ENCODE measurements at regions of chr20 and their contacts with region 1.

Region 1: GRCh38 chr20:15654208-15654645 is 919.0 kb downstream of the KIF16B start:
- DNase-seq: peak; percentile 76 to 79
- H3K4me3 ChIP-seq: no peak overlapping the region
- H3K4me3 Mint-ChIP-seq: no peak overlapping the region
- H3K27ac Mint-ChIP-seq: peak overlapping the region; percentile 24
- H3K4me1 ChIP-seq: peaks cover 30% of the 10 kb centered on the region
- H3K4me1 Mint-ChIP-seq: peaks cover 18% of the 10 kb centered on the region
- H3K27me3 ChIP-seq: no peaks in the 10 kb centered on the region
- H3K27me3 Mint-ChIP-seq: no peaks in the 10 kb centered on the region
- CTCF ChIP-seq: peak; percentile 67 to 78

Region 2: DNA sequence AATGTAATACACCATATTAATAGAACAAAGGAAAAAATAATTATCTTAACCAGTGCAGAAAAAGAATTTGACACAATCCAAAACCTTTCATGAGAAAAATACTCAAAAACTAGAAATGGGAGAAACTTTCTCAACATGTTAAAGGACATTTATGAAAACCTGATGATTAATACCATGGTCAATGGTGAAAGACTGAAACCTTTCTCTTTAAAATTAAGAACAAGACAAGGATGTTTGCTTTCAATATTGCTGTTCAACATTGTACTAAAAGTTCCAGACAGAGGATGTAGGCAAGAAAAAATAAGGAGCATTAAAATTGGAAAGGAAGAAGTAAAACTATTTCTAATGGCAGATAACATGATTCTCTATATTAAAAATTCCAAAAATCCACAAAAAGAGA is 335.5 kb before region 1 on chr20:
- CTCF ChIA-PET with region 1: no interaction called
- POLR2A ChIA-PET with region 1: no interaction called
- intact Hi-C with region 1: no loop called
- DNase-seq: no peak
- H3K4me3 ChIP-seq: no peak overlapping the region
- H3K4me3 Mint-ChIP-seq: no peak overlapping the region
- H3K27ac Mint-ChIP-seq: no peak overlapping the region
- H3K4me1 ChIP-seq: no peaks in the 10 kb centered on the region
- H3K4me1 Mint-ChIP-seq: no peaks in the 10 kb centered on the region
- H3K27me3 ChIP-seq: no peaks in the 10 kb centered on the region
- H3K27me3 Mint-ChIP-seq: no peaks in the 10 kb centered on the region
- CTCF ChIP-seq: no peak

Region 3: DNA sequence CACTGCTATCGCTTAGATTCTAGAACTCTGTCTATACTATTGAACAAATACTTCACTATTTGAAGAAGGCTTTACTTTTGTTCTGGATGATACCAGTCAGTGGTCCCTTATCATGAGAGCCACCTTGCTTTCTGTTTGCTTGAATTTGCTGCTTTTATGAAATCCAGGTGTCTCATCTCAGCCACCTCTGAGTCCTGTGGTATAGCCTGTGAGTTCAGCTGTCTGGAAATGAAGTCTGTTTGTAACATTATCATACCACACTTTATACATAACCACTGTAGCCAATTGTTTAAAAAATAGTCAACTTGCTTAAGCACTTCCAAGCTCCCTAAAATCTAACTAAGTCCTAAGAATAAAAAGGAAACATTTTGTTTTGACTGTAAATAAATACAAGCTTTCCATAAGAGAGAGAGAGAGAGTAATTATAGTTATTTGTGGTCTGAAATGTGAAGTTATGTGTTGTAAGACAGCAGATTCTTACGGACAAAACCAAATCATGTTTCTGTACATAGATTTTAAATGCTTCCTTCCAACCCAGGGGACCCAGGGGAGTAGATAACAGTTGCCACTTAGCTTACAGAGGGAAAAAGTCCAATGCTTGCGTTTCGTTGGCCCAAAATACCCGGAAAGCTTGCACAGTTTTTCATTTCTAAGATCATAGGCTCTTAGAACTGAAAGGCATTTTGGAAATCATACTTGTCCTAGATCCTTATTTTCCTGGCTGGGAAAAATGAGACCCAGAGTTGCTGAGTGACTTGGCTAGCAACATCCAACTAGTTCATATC is 209.0 kb before region 1 on chr20:
- CTCF ChIA-PET with region 1: no interaction called
- POLR2A ChIA-PET with region 1: no interaction called
- intact Hi-C with region 1: loop called (anchors 1 kb)
- DNase-seq: peak; percentile 44 to 48
- H3K4me3 ChIP-seq: no peak overlapping the region
- H3K4me3 Mint-ChIP-seq: no peak overlapping the region
- H3K27ac Mint-ChIP-seq: no peak overlapping the region
- H3K4me1 ChIP-seq: peaks cover 26% of the 10 kb centered on the region
- H3K4me1 Mint-ChIP-seq: peaks cover 30% of the 10 kb centered on the region
- H3K27me3 ChIP-seq: no peaks in the 10 kb centered on the region
- H3K27me3 Mint-ChIP-seq: no peaks in the 10 kb centered on the region
- CTCF ChIP-seq: no peak

Region 4: GRCh38 chr20:15596220-15596890 is 57.9 kb before region 1 on chr20:
- CTCF ChIA-PET with region 1: no interaction called
- POLR2A ChIA-PET with region 1: no interaction called
- intact Hi-C with region 1: loop called (anchors 1 kb)
- DNase-seq: no peak
- H3K4me3 ChIP-seq: no peak overlapping the region
- H3K4me3 Mint-ChIP-seq: no peak overlapping the region
- H3K27ac Mint-ChIP-seq: no peak overlapping the region
- H3K4me1 ChIP-seq: peaks cover 30% of the 10 kb centered on the region
- H3K4me1 Mint-ChIP-seq: peaks cover 18% of the 10 kb centered on the region
- H3K27me3 ChIP-seq: no peaks in the 10 kb centered on the region; the same call in 1 of the 2 replicates
- H3K27me3 Mint-ChIP-seq: no peaks in the 10 kb centered on the region
- CTCF ChIP-seq: no peak

Measured in Caco-2 (cell line).